Dendritic cell treated with granulocyte-macrophage colony-stimulating factor and Interleukin-4, amounts not matched to agents 40 ng/mL and 50 ng/mL, for 4 days (primary cell): ENCODE measurements at regions of chr15 and their contacts with region 1.

Region 1: DNA sequence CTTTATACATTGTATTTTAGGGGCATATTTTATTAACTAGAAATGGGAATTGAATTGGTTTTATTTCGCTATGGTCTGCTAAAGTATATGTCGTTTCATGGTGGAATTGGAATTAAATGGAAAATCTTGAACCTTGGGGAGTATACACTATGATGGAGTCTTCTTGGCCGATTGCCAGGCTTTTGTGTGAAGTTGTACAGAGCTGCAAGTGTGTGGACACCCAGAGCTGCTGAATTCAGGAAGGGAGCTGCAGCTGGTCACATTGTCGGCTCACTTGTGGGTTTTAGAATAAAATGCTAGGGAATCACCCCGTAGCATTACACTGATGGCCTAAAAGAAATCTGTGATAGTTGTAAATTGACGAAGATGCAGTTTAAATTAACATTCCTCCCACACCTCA is 35.1 kb downstream of the USP3 start:
- H3K4me3 Mint-ChIP-seq: no peak overlapping the region
- H3K27ac Mint-ChIP-seq: no peak overlapping the region
- H3K4me1 Mint-ChIP-seq: peaks cover 54% of the 10 kb centered on the region
- H3K27me3 Mint-ChIP-seq: no peaks in the 10 kb centered on the region

Region 2: DNA sequence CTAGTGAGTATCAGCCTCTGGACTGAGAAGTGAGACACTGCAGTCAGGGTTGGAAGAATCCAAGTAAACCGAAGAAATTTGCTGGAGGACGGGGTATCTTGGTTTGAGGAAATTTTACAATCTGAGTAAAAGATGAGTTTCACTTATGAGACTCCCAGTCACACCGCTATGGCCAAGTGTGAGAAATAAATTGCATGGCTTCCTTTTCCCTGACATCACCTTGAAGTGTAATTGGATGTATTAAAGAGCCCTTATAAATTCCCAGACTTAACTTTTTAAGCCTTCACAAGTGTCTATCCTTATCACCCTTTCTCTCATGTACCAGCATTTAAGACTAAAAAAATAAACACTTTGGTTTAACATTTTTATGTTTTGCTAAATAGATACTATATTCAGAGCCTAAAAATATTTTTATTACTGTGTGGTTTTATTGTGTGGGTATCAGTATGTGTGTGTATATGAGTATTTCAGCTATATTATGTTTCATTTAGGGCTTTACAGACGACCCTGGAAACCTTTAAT is 11.3 kb before region 1 on chr15:
- intact Hi-C with region 1: loop called (anchors 2 kb)
- H3K4me3 Mint-ChIP-seq: no peak overlapping the region
- H3K27ac Mint-ChIP-seq: no peak overlapping the region
- H3K4me1 Mint-ChIP-seq: peaks cover 90% of the 10 kb centered on the region
- H3K27me3 Mint-ChIP-seq: no peaks in the 10 kb centered on the region

Region 3: DNA sequence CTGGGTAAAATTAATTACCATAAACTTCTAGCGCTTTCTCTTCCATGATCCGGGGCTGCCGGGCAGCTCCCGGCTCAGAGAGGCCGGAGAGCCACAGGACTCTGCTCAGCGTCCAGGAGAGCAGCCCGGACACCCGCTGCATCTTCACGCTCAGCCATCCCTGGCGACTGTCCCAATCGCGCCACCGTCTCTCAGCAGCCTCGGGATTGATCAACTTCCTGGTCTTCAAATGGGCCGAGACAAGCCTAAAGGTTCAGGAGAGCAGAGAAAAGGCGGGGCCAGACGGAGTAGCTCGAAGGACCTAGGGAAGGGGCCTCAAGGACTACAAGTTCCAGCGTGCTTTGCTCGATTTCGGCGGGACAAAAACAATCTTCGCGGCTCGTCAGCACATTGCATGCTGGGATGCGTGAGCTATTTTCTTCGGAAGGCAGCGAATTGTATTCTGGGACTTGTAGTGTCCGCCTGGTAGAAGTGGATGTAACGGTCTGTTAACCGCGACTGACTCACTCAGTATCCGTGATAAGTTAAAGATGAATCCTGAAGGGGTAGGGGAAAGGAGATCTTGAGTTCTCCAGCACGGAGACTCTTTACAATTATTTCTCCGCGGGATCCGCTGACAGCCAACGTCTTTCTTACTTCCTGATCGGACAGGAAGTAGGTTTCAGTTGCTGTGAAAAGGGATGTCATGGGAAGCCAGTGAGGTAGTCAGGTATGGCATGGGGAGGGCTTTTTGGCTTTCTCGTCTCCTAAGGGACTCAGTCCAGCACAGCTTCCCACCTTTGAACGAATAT is 554.3 kb after region 1 on chr15 and contains the start of gene CIAO2A:
- intact Hi-C with region 1: no loop called
- H3K4me3 Mint-ChIP-seq: peak within 1 kb of the TSS; percentile 100
- H3K27ac Mint-ChIP-seq: peak within 1 kb of the TSS; percentile 94
- H3K4me1 Mint-ChIP-seq: peaks cover 68% of the 10 kb centered on the region
- H3K27me3 Mint-ChIP-seq: no peaks in the 10 kb centered on the region